CD4-positive, alpha-beta T cell (primary cell): ENCODE measurements at regions of chr12 and their contacts with region 1.

Region 1: GRCh38 chr12:113310489-113310888 is 24.4 kb downstream of the SLC8B1 start:
- DNase-seq: peak in 1 of 14 experiments; percentile 6
- ATAC-seq: no peak
- H3K4me3 ChIP-seq: no peak overlapping the region
- H3K4me3 Mint-ChIP-seq: no peak overlapping the region
- H3K27ac ChIP-seq: no peak overlapping the region
- H3K27ac Mint-ChIP-seq: no peak overlapping the region
- H3K4me1 ChIP-seq: no peaks in the 10 kb centered on the region
- H3K4me1 Mint-ChIP-seq: no peaks in the 10 kb centered on the region
- H3K27me3 ChIP-seq: no peaks in the 10 kb centered on the region
- H3K27me3 Mint-ChIP-seq: no peaks in the 10 kb centered on the region
- CTCF ChIP-seq: no peak

Region 2: DNA sequence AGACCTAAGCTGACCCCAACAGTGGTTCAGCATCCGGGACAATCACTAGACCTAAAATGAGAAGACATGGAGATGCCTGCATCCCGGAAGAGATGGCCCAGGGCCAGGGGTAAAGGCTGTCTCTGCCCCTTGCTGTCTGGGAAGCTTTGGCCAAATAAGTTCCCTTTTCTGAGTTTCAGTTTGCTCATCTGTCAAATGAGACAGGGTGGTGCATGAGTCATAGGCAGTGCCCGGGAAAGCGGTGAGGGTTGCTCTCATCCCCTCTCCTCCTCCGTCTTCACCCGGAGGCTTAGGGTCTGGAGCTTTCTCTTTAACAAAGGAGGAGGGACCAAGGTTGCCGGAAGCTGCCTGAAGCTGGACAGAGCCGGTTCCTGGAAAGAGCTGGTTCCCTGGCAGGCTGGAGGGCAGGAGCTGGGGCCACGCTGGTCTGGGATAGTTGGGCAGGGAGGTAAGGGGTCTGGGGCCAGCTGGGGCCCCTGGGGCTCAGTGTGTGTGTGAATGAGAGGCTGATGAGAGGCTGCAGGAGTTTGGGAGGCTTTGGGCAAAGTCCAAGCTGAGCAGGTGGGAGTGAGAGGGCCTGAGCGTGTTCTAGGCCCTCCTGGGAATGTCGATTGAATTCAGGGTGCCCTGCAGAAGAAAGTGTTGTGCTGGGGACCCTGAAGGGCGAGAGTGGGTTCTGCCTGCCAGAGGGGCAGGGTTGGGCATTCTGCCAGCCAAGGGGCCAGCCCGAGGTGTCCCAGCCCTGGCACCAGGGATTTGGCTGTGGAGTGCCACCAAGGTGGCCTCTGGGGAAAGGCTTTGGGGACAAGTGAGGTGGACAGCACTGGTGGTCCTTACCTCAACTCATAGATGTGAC is 111.8 kb after region 1 on chr12 and contains the start of gene SDSL:
- CTCF ChIA-PET with region 1: interaction called, 4 read pairs
- POLR2A ChIA-PET with region 1: no interaction called
- intact Hi-C with region 1: loop called in 1 of 2 experiments (anchors 2 kb)
- DNase-seq: peak in 3 of 14 experiments; percentile 25 to 76 (median 67)
- ATAC-seq: peak; percentile 66
- H3K4me3 ChIP-seq: peak within 1 kb of the TSS; percentile 3
- H3K4me3 Mint-ChIP-seq: peak within 1 kb of the TSS; percentile 87
- H3K27ac ChIP-seq: no peak within 1 kb of the TSS
- H3K27ac Mint-ChIP-seq: peak within 1 kb of the TSS; percentile 77
- H3K4me1 ChIP-seq: peaks cover 3% of the 10 kb centered on the region
- H3K4me1 Mint-ChIP-seq: peaks cover 14% of the 10 kb centered on the region
- H3K27me3 ChIP-seq: no peaks in the 10 kb centered on the region
- H3K27me3 Mint-ChIP-seq: no peaks in the 10 kb centered on the region
- CTCF ChIP-seq: no peak
- total RNA-seq, gene SDSL: 0.47 to 0.50 TPM

Region 3: GRCh38 chr12:113524495-113524894 is 214.0 kb after region 1 on chr12:
- CTCF ChIA-PET with region 1: no interaction called
- POLR2A ChIA-PET with region 1: no interaction called
- intact Hi-C with region 1: no loop called
- DNase-seq: no peak
- ATAC-seq: no peak
- H3K4me3 ChIP-seq: no peak overlapping the region
- H3K4me3 Mint-ChIP-seq: no peak overlapping the region
- H3K27ac ChIP-seq: no peak overlapping the region
- H3K27ac Mint-ChIP-seq: no peak overlapping the region
- H3K4me1 ChIP-seq: no peaks in the 10 kb centered on the region
- H3K4me1 Mint-ChIP-seq: no peaks in the 10 kb centered on the region
- H3K27me3 ChIP-seq: peaks cover 42% of the 10 kb centered on the region in 2 experiments
- H3K27me3 Mint-ChIP-seq: peaks cover 93% of the 10 kb centered on the region
- CTCF ChIP-seq: no peak